Thyroid gland (tissue), 4 donors: ENCODE measurements at regions of chr13 and their contacts with region 1.

Region 1: DNA sequence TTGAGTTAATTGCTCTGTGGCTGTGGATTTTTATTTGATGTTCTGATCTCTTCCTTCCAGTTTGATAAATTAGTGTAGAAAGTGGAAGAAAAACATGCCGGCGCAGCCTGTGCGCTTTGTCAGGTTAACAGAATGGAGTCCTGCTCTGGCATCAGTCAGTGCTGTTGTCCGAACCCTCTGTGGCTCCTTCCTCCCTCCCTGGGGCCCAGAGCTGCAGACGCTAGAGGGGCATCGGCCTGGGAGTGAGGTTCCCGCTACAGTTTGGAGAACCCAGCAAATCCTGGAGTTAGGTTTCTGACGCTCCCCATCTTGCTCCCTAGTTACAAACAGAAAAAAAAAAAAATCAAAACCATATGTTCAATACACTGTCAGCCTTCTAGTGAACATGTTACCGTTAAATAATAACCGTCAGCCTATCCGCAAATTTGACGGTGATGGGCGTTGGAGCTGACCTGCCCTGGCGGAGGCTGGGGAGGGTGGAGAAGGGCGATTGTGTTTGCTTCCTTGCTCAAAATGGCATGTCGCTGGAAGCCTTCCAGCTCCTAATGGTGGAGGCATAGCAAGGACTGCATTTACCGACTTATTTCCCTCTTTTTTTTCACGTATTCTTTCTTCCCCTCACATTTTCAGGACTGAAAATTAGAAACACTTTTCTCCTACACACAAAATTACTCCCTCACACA is 13.6 kb downstream of the MBNL2 start:
- DNase-seq: no peak
- H3K4me3 ChIP-seq: no peak overlapping the region
- H3K27ac ChIP-seq: peak overlapping the region in 1 of 3 donors; percentile 51
- H3K4me1 ChIP-seq: peaks cover 34 to 48% of the 10 kb centered on the region in 2 donors
- H3K27me3 ChIP-seq: no peaks in the 10 kb centered on the region
- CTCF ChIP-seq: no peak
- POLR2A ChIP-seq: no peak

Region 2: GRCh38 chr13:96294930-96295881 is 940.5 kb before region 1 on chr13:
- intact Hi-C with region 1: no loop called
- DNase-seq: no peak
- H3K4me3 ChIP-seq: no peak overlapping the region
- H3K27ac ChIP-seq: no peak overlapping the region
- H3K4me1 ChIP-seq: no peaks in the 10 kb centered on the region
- H3K27me3 ChIP-seq: no peaks in the 10 kb centered on the region
- CTCF ChIP-seq: no peak
- POLR2A ChIP-seq: no peak

Region 3: DNA sequence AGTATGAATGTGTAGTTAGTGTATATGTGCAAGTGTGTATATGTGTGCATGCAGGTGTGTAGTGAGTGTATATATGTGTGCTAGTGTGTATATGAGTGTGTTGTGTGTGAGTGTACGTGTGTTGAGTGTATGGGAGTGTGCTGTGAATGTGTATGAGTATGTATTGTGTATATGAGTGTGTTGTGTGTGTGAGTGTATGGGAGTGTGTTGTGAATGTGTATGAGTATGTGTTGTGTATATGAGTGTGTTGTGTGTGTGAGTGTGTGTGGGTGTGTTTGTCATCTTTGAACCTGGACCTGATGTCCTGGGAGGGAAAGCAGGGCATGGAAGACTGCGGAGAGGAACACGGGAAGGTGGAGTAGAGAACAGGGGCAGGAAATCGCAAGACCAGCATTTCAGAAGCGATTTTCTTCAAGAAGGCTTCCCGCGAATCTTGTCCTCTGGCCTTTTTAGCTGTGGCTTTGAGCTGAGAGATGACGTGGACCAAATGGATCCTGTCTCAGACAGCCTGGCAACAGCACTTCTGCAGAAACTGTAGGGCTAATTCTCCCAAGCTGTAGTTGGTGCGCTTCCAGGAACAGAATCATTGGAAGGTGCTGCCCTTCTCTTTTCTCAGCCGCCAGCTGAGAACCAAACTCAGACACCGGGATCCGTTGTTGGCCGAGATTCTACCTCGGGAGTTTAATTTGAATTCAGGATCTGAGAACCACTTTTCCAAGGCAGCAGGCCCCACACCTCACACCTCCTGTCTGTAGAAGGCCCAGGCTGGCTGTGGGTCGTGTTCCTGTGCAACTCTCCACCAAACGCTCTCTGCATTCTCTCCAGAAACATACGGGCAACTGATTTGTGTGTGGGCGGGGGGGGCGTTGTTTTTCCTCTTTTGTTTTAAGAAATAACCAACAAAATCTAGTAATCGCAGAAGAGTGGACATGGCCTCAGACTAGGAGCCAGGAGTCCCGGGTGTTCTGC is 103.6 kb after region 1 on chr13:
- intact Hi-C with region 1: loop called (anchors 10 kb)
- DNase-seq: no peak
- H3K4me3 ChIP-seq: no peak overlapping the region
- H3K27ac ChIP-seq: no peak overlapping the region
- H3K4me1 ChIP-seq: peaks cover 3 to 4% of the 10 kb centered on the region in 2 donors
- H3K27me3 ChIP-seq: no peaks in the 10 kb centered on the region
- CTCF ChIP-seq: no peak
- POLR2A ChIP-seq: no peak

Region 4: DNA sequence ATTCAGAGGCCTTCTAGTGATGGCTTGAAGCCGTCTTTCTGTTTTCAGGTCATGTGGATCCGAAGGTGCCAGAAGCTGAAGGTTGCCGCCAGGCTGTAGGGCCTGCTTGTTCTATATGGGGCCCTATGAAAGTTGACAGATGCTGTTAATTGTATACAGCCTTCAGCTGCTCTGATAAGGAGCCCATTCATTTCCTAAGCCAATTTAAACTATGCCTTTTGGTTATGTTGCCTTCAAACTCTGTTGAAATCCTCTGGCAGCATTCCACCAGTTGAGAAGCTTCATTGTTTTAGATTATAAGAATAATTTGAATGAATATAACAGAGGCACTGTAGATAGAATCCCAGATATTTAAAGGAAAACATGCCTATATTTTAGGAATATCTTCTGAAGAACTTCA is 232.6 kb after region 1 on chr13:
- intact Hi-C with region 1: no loop called
- DNase-seq: no peak
- H3K4me3 ChIP-seq: no peak overlapping the region
- H3K27ac ChIP-seq: no peak overlapping the region
- H3K4me1 ChIP-seq: peaks cover 9 to 12% of the 10 kb centered on the region in 2 donors
- H3K27me3 ChIP-seq: no peaks in the 10 kb centered on the region
- CTCF ChIP-seq: no peak
- POLR2A ChIP-seq: no peak

Region 5: GRCh38 chr13:97537110-97537509 is 301.4 kb after region 1 on chr13:
- intact Hi-C with region 1: no loop called
- DNase-seq: no peak
- H3K4me3 ChIP-seq: no peak overlapping the region
- H3K27ac ChIP-seq: no peak overlapping the region
- H3K4me1 ChIP-seq: no peaks in the 10 kb centered on the region
- H3K27me3 ChIP-seq: no peaks in the 10 kb centered on the region
- CTCF ChIP-seq: no peak
- POLR2A ChIP-seq: no peak